Activated CD8-positive, alpha-beta T cell treated with anti-CD3 and anti-CD28 coated beads for 36 hours (primary cell): ENCODE measurements at regions of chr6 and their contacts with region 1.

Region 1: DNA sequence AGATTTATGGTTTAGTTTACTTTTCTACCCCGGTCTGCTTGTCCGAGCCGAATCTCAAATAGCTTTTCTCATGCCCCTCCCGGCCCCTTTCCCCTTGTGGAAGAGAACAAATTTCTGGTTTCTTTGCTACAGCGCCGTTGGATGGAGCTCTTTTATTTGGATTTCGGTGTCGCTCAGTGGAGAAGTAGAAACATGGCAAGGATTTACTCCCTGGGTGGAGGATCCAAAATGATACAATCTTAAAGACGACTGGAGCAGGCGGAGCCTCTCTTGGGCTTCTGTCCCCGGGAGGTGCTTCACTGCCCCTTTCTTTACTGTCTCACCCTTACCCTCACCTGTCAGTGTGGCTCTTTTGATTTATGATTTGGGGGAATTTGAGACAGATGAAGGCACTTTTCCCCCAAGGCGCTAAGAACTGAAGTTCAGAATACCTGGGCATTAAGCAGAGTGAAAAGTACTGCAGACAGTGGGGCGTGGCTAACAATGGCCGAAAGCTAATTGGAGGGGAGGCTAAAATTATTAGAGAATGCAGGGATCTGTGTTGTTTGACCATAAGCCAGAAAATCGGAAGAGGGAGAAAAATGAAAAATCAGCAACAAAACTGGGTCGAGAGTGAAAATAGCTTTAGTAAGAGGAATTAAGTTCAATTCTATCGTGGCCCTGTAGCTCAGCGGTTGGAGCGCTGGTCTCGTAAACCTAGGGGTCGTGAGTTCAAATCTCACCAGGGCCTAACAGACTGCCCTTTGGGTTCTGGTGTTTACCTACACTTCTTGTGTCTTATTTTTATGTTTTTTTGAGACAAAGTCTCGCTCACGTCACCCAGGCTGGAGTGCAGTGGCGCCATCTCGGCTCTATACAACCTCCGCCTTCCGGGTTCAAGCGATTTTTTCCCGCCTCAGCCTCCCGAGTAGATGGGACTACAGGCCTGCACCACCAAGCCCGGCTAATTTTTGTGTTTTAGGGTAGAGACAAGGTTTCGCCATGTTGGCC is 145.1 kb upstream of the ZNF184 start:
- DNase-seq: peak; percentile 29
- ATAC-seq: no peak
- H3K4me3 Mint-ChIP-seq: peak overlapping the region; percentile 61
- H3K27ac Mint-ChIP-seq: peak overlapping the region; percentile 38
- H3K4me1 Mint-ChIP-seq: peaks cover 10% of the 10 kb centered on the region
- H3K27me3 Mint-ChIP-seq: peaks cover 54% of the 10 kb centered on the region
- CTCF ChIP-seq: no peak

Region 2: GRCh38 chr6:27630727-27631608 is 13.0 kb after region 1 on chr6:
- CTCF ChIA-PET with region 1: interaction called, 10 read pairs
- POLR2A ChIA-PET with region 1: interaction called, 3 read pairs
- intact Hi-C with region 1: no loop called
- DNase-seq: peak; percentile 84
- ATAC-seq: peak; percentile 86
- H3K4me3 Mint-ChIP-seq: peak overlapping the region; percentile 85
- H3K27ac Mint-ChIP-seq: peak overlapping the region; percentile 57
- H3K4me1 Mint-ChIP-seq: peaks cover 12% of the 10 kb centered on the region
- H3K27me3 Mint-ChIP-seq: peaks cover 63% of the 10 kb centered on the region
- CTCF ChIP-seq: no peak

Region 3: GRCh38 chr6:27706431-27706830 is 88.4 kb after region 1 on chr6:
- CTCF ChIA-PET with region 1: no interaction called
- POLR2A ChIA-PET with region 1: no interaction called
- intact Hi-C with region 1: no loop called
- DNase-seq: no peak
- ATAC-seq: no peak
- H3K4me3 Mint-ChIP-seq: no peak overlapping the region
- H3K27ac Mint-ChIP-seq: no peak overlapping the region
- H3K4me1 Mint-ChIP-seq: no peaks in the 10 kb centered on the region
- H3K27me3 Mint-ChIP-seq: no peaks in the 10 kb centered on the region
- CTCF ChIP-seq: no peak